Colonic mucosa (tissue), 4 donors: ENCODE measurements at regions of chr12 and their contacts with region 1.

Region 1: GRCh38 chr12:6965026-6965661 is 5.3 kb downstream of the PHB2 start:
- DNase-seq: peak; percentile 95
- H3K4me3 ChIP-seq: peak overlapping the region; percentile 57
- H3K27ac ChIP-seq: peak overlapping the region; percentile 95
- H3K4me1 ChIP-seq: peaks cover 31% of the 10 kb centered on the region
- H3K27me3 ChIP-seq: no peaks in the 10 kb centered on the region
- CTCF ChIP-seq: peak; percentile 92

Region 2: GRCh38 chr12:6867413-6868210 is 97.5 kb before region 1 on chr12 and contains the start of gene TPI1:
- intact Hi-C with region 1: loop called (anchors 5 kb)
- DNase-seq: peak; percentile 88
- H3K4me3 ChIP-seq: peak within 1 kb of the TSS; percentile 98
- H3K27ac ChIP-seq: peak within 1 kb of the TSS; percentile 96
- H3K4me1 ChIP-seq: peaks cover 22% of the 10 kb centered on the region
- H3K27me3 ChIP-seq: no peaks in the 10 kb centered on the region
- CTCF ChIP-seq: no peak
- total RNA-seq, gene TPI1: 1,097 to 1,106 TPM

Region 3: GRCh38 chr12:6944381-6945186 is 20.6 kb before region 1 on chr12:
- intact Hi-C with region 1: loop called (anchors 2 kb)
- DNase-seq: peak; percentile 97
- H3K4me3 ChIP-seq: peak overlapping the region; percentile 54
- H3K27ac ChIP-seq: peak overlapping the region; percentile 98
- H3K4me1 ChIP-seq: peaks cover 14% of the 10 kb centered on the region
- H3K27me3 ChIP-seq: no peaks in the 10 kb centered on the region
- CTCF ChIP-seq: peak; percentile 76

Region 4: GRCh38 chr12:7079826-7080125 is 114.6 kb after region 1 on chr12:
- intact Hi-C with region 1: no loop called
- DNase-seq: no peak
- H3K4me3 ChIP-seq: no peak overlapping the region
- H3K27ac ChIP-seq: peak overlapping the region; percentile 57
- H3K4me1 ChIP-seq: no peaks in the 10 kb centered on the region
- H3K27me3 ChIP-seq: no peaks in the 10 kb centered on the region
- CTCF ChIP-seq: no peak